ENCODE measurements at regions of chr4 and their contacts with region 1.

Region 1: DNA sequence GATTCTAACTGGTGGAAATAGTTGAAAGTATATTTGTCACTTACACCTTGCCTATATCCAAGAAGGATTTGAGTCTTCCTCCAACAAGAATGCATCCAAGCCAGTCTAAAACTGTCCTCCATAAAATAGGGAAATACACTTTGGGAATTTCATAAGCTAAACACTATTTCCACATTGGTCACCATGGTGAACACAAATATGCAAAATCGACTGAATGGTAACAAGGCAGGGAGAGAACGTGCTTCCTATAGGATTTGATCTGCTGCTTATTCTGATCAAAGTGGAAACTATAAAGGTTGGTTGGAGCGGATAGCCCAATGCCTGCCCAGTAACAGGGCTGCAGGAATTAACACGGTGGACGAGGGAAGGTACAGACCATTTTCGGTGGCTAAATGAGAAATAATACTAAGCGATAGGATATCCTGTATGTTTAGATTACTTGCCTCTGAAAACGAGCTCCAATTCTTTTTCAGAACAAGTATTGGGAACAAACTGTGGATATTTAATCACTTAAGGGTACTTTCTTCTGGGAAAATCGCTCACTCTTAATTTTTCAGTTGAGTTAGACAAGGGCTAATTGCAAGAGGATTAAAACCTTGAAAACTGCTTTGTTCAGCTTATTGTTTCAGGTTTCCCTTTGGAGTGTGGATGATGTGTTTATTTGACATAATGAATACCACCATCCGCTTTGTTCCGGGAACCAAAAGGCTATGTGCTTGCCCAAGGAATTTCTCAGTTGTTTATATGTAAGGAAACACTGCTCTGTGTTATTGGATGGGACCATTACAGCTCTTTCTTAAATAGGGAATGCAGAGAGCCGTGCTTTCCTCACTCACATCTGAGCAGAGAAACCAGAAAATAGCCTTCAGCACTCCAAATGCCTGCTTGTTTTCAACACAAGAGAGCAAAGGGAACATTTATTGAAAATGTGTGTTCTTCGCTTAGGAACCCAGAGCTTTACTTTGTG is 194.4 kb downstream of the CBR4 start:
- DNase-seq: no peak
- H3K4me3 ChIP-seq: no peak overlapping the region
- H3K27ac ChIP-seq: no peak overlapping the region
- H3K4me1 ChIP-seq: peaks cover 35% of the 10 kb centered on the region
- H3K27me3 ChIP-seq: no peaks in the 10 kb centered on the region
- CTCF ChIP-seq: no peak

Region 2: DNA sequence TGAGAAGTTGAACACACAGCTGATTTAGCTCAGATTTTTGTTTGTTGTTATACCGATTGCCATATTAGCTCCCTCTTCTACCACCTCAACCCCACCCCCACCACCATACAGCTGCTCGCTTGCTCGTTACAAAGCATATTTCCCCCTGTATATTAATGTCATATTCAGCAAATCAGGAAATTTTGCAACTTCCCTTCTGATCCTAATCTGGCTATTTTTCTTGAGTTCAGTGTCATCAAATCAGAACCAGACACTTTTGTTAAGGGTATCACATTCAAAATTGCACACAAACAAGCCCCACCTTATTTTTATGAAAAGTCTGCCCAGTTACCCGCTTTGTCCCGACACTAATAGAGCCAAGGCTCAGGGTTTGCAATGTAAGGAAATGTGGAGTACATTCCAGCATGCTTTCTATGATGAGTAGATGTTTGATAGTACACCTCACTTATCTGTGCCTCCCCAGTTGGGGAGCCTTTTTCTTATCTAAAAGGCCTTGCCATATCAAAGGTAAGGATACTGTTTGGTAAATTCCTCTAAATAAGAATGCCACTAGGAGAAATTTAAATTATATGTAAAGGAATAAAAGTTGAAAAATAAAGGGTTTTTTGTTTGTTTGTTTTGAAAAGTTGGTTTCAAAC is 17.8 kb before region 1 on chr4:
- CTCF ChIA-PET with region 1: no interaction called
- POLR2A ChIA-PET with region 1: no interaction called
- intact Hi-C with region 1: loop called (anchors 2 kb)
- DNase-seq: peak; percentile 68
- H3K4me3 ChIP-seq: peak overlapping the region; percentile 28
- H3K27ac ChIP-seq: peak overlapping the region; percentile 87
- H3K4me1 ChIP-seq: peaks cover 46% of the 10 kb centered on the region
- H3K27me3 ChIP-seq: no peaks in the 10 kb centered on the region
- CTCF ChIP-seq: no peak

Region 3: DNA sequence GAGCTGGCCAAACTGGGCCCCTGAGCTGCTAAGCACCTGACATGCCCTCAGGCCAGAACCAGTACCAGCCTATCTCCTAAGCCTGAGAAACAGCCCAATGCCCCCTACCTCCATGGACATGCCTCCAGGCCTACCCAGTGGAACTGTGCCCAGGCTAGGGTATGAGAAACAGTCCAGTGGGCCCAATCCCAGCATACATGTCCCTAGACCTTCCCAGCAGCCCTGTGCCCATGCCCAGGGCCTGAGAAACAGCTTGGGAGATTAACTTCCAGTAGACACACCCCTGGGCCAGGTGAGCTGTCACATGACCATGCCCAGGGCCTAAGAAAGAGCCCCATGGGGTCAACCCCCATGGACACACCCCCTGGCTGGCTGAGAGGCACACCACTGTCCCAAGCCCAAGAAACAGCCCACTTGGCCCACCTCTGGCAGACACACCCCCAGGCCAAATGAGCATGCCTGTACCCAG is 115.6 kb after region 1 on chr4:
- CTCF ChIA-PET with region 1: no interaction called
- POLR2A ChIA-PET with region 1: no interaction called
- intact Hi-C with region 1: no loop called
- DNase-seq: no peak
- H3K4me3 ChIP-seq: no peak overlapping the region
- H3K27ac ChIP-seq: no peak overlapping the region
- H3K4me1 ChIP-seq: no peaks in the 10 kb centered on the region
- H3K27me3 ChIP-seq: no peaks in the 10 kb centered on the region
- CTCF ChIP-seq: no peak